Activated CD4-positive, alpha-beta T cell treated with anti-CD3 and anti-CD28 coated beads for 36 hours (primary cell): ENCODE measurements at regions of chr1 and their contacts with region 1.

Region 1: DNA sequence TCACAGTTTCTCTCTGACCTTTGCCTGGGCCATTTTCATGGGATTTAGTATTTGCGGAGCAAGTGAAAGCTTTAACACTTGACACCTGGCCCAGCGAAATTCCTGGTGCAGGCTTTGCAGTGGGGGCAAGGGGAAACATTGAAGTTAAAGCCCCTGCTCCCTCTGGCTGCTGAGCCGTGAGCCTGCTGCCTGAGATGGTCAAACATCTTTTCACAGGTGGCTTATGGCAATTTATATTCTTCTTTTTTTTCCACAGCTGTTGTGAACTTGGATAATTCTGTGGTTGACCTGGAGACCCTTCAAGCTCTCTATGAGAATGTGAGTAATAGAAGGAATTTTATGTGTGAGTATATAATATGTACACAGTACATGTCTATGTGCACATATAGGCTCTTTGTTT is 202.9 kb downstream of the FMN2 start:
- DNase-seq: no peak
- ATAC-seq: no peak
- H3K4me3 Mint-ChIP-seq: no peak overlapping the region
- H3K27ac Mint-ChIP-seq: no peak overlapping the region
- H3K4me1 Mint-ChIP-seq: no peaks in the 10 kb centered on the region
- H3K27me3 Mint-ChIP-seq: no peaks in the 10 kb centered on the region

Region 2: DNA sequence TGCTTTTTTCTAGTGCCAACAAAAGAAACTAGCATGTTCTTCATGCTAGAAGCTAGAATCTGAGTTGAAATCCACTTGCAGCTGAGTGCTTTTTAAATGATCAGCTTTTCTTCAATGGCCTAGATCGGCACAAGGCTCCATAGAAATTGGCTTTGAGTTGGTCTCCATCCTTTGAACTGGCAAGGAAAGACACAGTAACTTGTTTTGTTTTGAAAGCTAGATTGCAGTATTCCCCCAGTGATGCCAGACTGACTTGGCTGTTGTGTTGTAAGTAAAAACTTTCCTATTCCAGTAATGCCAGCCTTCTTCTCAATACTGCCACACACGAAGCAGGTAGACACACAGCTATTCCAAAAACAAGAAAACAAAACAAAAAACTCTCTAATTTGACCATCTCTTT is 63.8 kb before region 1 on chr1:
- CTCF ChIA-PET with region 1: no interaction called
- POLR2A ChIA-PET with region 1: no interaction called
- intact Hi-C with region 1: no loop called
- DNase-seq: no peak
- ATAC-seq: no peak
- H3K4me3 Mint-ChIP-seq: no peak overlapping the region
- H3K27ac Mint-ChIP-seq: no peak overlapping the region
- H3K4me1 Mint-ChIP-seq: no peaks in the 10 kb centered on the region
- H3K27me3 Mint-ChIP-seq: no peaks in the 10 kb centered on the region

Region 3: GRCh38 chr1:240414237-240414636 is 119.7 kb after region 1 on chr1:
- CTCF ChIA-PET with region 1: no interaction called
- POLR2A ChIA-PET with region 1: no interaction called
- intact Hi-C with region 1: loop called in 1 of 2 experiments (anchors 5 kb)
- DNase-seq: no peak
- ATAC-seq: no peak
- H3K4me3 Mint-ChIP-seq: no peak overlapping the region
- H3K27ac Mint-ChIP-seq: no peak overlapping the region
- H3K4me1 Mint-ChIP-seq: no peaks in the 10 kb centered on the region
- H3K27me3 Mint-ChIP-seq: no peaks in the 10 kb centered on the region